ENCODE measurements at regions of chr6 and their contacts with region 1.

Region 1: DNA sequence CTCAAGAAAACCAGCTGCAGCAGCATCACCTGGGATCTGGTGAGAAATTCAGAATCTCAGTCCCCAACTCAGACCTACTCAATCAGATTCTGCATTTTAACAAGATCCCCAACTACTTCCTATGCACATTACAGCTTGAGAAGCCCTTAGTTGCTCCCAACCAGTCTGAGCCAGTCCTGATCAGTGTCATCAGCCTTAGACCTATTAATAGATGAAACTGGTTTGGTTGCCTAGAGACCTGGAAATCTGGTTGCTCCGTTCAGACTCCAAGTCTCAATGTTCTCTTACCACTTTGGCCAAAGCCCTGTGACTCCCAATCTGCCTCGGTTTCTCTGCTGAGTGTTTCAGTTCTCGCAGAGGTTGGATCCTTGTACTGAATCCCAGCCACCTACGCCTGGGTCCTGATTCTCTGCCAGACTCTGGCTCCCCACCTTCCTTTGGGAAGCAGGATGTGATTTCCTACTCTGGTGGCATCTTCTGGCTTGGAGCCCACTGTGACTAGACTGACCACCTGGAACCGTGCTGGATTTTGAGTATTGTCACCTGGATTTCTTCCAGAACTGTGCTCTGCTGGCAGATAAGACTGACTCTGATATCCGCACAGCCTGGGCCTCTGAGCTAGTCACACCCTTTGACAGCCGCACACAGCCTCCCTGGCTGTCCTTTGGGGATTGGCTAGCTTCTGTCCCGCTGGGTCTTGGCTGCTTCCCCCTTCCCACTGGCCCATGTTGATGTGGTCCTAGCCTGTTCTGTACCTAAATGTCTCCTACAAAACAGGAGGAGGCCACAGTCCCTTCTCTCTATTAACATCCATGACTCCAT is 20.3 kb upstream of the ATXN1 start:
- DNase-seq: no peak
- H3K4me3 ChIP-seq: no peak overlapping the region
- H3K27ac ChIP-seq: no peak overlapping the region
- H3K4me1 ChIP-seq: peaks cover 0 to 12% (median 10%) of the 10 kb centered on the region in 4 donors
- H3K27me3 ChIP-seq: no peaks in the 10 kb centered on the region
- CTCF ChIP-seq: no peak

Region 2: GRCh38 chr6:16964553-16965501 is 183.3 kb after region 1 on chr6:
- intact Hi-C with region 1: loop called (anchors 10 kb)
- DNase-seq: peak; percentile 64 to 82
- H3K4me3 ChIP-seq: peak overlapping the region in 1 of 2 donors; percentile 26
- H3K27ac ChIP-seq: no peak overlapping the region
- H3K4me1 ChIP-seq: peaks cover 0 to 8% (median 7%) of the 10 kb centered on the region in 4 donors
- H3K27me3 ChIP-seq: peaks cover 0 to 2% of the 10 kb centered on the region in 2 donors
- CTCF ChIP-seq: peak; percentile 81 to 88